Activated CD4-positive, alpha-beta T cell treated with anti-CD3 and anti-CD28 coated beads for 36 hours (primary cell): ENCODE measurements at regions of chr3 and their contacts with region 1.

Region 1: GRCh38 chr3:89586256-89586655 is 478.8 kb downstream of the EPHA3 start:
- DNase-seq: no peak
- ATAC-seq: no peak
- H3K4me3 Mint-ChIP-seq: no peak overlapping the region
- H3K27ac Mint-ChIP-seq: no peak overlapping the region
- H3K4me1 Mint-ChIP-seq: no peaks in the 10 kb centered on the region
- H3K27me3 Mint-ChIP-seq: no peaks in the 10 kb centered on the region

Region 2: DNA sequence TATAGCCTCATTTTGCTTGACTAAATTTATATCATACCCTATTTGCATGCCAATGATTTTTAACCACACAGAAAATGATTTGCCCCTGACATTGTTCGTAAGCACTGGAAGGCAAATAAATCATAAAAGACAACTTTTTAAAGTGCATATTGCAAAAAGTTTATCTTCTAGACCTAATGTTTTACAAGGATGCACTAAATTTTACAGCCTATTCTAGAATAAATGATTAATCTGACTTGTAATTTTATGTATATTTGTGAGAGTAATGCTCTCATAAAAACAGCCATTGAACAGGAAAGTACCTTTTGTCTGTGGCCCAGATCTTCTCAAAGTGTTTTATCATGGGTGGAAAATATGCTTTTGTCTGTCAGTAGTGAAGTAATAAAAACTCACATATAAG is 67.8 kb after region 1 on chr3:
- CTCF ChIA-PET with region 1: no interaction called
- POLR2A ChIA-PET with region 1: no interaction called
- intact Hi-C with region 1: loop called in 1 of 2 experiments (anchors 10 kb)
- DNase-seq: no peak
- ATAC-seq: no peak
- H3K4me3 Mint-ChIP-seq: no peak overlapping the region
- H3K27ac Mint-ChIP-seq: no peak overlapping the region
- H3K4me1 Mint-ChIP-seq: no peaks in the 10 kb centered on the region
- H3K27me3 Mint-ChIP-seq: no peaks in the 10 kb centered on the region